OCI-LY7 (cell line): ENCODE measurements at regions of chr2 and their contacts with region 1.

Region 1: GRCh38 chr2:47697000-47697601 is 85.8 kb upstream of the MSH6 start:
- DNase-seq: peak; percentile 79
- H3K4me3 ChIP-seq: peak overlapping the region; percentile 99
- H3K27ac ChIP-seq: peak overlapping the region; percentile 97
- H3K4me1 ChIP-seq: peaks cover 58% of the 10 kb centered on the region
- CTCF ChIP-seq: no peak

Region 2: GRCh38 chr2:46569061-46569560 is 1128.0 kb before region 1 on chr2:
- CTCF ChIA-PET with region 1: no interaction called
- POLR2A ChIA-PET with region 1: no interaction called
- intact Hi-C with region 1: loop called (anchors 5 kb)
- DNase-seq: peak; percentile 88
- H3K4me3 ChIP-seq: peak overlapping the region; percentile 57
- H3K27ac ChIP-seq: peak overlapping the region; percentile 100
- H3K4me1 ChIP-seq: peaks cover 99% of the 10 kb centered on the region
- CTCF ChIP-seq: no peak

Region 3: DNA sequence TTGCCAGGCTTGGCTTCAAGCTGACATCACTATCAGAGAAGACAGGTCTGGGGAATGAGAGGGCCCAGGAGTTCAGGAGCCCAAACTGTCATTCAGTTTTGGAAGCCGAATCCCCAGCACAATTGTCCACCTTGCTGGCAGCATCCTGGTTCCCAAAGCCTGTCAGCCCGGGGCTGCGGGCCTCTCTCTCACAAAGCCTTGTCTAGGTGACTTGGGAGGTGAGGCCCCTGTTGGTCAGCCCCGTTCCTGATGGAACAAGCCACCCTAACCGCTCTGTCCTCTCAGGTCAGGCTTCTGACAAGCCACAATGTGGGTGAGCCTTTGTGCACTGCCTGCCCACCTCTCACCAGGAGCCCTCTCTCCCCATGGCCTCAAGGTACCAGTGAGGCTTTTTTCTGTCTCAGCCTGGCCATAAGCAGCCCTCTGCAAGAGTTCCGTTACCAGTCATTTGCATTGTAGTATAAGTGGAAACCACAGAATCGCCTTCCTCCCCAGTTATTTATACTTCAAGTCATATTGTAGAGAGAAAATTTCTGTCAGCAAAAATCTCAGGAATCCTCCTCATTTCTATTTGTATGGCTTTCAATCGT is 193.5 kb before region 1 on chr2:
- CTCF ChIA-PET with region 1: no interaction called
- POLR2A ChIA-PET with region 1: interaction called, 5 read pairs
- intact Hi-C with region 1: loop called (anchors 5 kb)
- DNase-seq: peak; percentile 81
- H3K4me3 ChIP-seq: peak overlapping the region; percentile 43
- H3K27ac ChIP-seq: peak overlapping the region; percentile 92
- H3K4me1 ChIP-seq: peaks cover 37% of the 10 kb centered on the region
- CTCF ChIP-seq: no peak

Region 4: DNA sequence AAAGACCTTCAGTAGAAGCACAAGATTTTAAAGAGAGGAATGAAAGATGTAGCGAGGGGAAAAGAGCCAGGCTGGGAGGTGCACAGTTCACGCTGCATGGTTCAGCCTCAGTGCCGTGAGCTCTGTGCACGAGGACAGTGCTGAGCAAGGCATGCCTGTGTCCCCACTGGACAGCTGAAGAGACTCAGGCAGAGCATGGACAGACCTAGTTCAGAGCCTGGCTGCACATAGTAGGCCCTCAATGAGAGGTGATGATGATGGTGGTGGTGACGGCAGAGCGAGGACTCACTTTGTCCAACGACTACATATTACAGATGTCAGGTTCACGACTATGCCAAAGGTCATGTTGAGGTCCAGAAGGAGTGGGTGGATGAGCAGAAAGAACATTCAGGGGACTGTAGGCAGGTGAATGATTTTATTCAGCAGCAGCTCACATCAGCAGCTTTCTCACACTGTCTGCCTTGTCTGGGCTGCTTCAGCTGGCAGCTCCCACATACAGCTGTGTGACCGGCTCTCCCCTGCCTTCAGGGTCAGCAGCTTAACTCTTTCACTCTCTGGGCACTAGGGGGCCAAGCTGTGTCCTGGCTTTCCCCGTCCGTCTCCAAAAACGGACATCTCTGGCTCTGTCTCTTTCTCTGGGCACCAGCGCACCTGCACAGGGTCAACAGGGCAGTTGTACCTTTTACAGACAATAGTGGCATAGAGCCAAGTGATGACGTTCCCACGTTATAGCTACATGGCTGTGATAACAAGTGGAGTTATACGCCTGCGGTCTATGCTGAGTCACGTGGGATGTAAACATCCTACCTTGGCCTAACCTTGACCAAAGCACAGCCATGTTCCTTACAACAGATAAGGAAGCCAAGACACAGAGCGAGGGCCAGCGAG is 43.0 kb before region 1 on chr2:
- CTCF ChIA-PET with region 1: no interaction called
- POLR2A ChIA-PET with region 1: interaction called, 229 read pairs
- intact Hi-C with region 1: loop called (anchors 1 kb)
- DNase-seq: peak; percentile 70
- H3K4me3 ChIP-seq: peak overlapping the region; percentile 71
- H3K27ac ChIP-seq: peak overlapping the region; percentile 97
- H3K4me1 ChIP-seq: peaks cover 78% of the 10 kb centered on the region
- CTCF ChIP-seq: peak; percentile 73

Region 5: GRCh38 chr2:47708801-47709499 is 11.8 kb after region 1 on chr2:
- CTCF ChIA-PET with region 1: no interaction called
- POLR2A ChIA-PET with region 1: interaction called, 146 read pairs
- intact Hi-C with region 1: no loop called
- DNase-seq: no peak
- H3K4me3 ChIP-seq: no peak overlapping the region
- H3K27ac ChIP-seq: peak overlapping the region; percentile 65
- H3K4me1 ChIP-seq: peaks cover 59% of the 10 kb centered on the region
- CTCF ChIP-seq: no peak

Region 6: GRCh38 chr2:47735136-47735869 is 38.2 kb after region 1 on chr2:
- CTCF ChIA-PET with region 1: interaction called, 3 read pairs
- POLR2A ChIA-PET with region 1: interaction called, 39 read pairs
- intact Hi-C with region 1: loop called (anchors 1 kb)
- DNase-seq: no peak
- H3K4me3 ChIP-seq: peak overlapping the region; percentile 28
- H3K27ac ChIP-seq: peak overlapping the region; percentile 94
- H3K4me1 ChIP-seq: peaks cover 82% of the 10 kb centered on the region
- CTCF ChIP-seq: 0 out of 2 replicates have a peak, but pooled peaks have one; percentile 5

Region 7: GRCh38 chr2:47767880-47768609 is 70.9 kb after region 1 on chr2:
- CTCF ChIA-PET with region 1: interaction called, 7 read pairs
- POLR2A ChIA-PET with region 1: interaction called, 37 read pairs
- intact Hi-C with region 1: loop called (anchors 2 kb)
- DNase-seq: peak; percentile 75
- H3K4me3 ChIP-seq: no peak overlapping the region
- H3K27ac ChIP-seq: peak overlapping the region; percentile 65
- H3K4me1 ChIP-seq: peaks cover 65% of the 10 kb centered on the region
- CTCF ChIP-seq: peak; percentile 99